ENCODE measurements at regions of chr5 and their contacts with region 1.

Region 1: DNA sequence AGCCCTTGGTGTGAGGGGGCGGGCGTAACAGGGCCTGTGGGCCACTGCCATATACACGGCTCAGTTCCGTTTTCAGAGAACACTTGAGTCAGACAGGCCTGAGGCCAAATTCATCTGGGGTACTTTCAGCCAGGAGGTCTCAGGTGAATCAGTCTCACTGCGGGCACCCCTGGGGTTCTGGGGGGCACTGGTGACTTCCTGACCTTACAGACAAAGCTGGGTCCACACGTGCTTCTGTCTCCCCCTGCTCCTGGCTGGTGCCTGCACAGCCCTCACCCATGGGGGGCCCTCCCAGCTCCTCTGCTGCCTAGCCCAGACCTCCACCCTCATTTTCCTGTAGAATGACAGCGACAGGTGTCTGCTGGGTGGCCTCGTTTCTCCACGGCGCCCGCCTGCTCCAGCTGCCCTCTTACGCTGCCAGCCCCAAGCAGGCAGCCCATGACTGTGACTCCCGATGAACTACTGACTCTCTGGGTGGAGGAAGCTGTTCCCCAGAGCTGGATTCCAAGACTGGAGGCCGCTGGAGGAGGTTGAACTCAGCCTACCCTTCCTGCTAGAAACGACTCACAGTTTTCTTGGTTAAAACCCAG is 374.1 kb upstream of the IRX4 start:
- DNase-seq: no peak
- H3K4me3 ChIP-seq: no peak overlapping the region
- CTCF ChIP-seq: no peak

Region 2: GRCh38 chr5:2178528-2178927 is 78.3 kb before region 1 on chr5:
- in situ Hi-C with region 1: loop called (anchors 5 kb)
- DNase-seq: no peak
- H3K4me3 ChIP-seq: no peak overlapping the region
- CTCF ChIP-seq: no peak